A673 (cell line): ENCODE measurements at regions of chr1 and their contacts with region 1.

Region 1: GRCh38 chr1:113242481-113242880 is 147.8 kb upstream of the MAGI3 start:
- DNase-seq: no peak
- H3K4me3 ChIP-seq: no peak overlapping the region
- H3K27ac ChIP-seq: no peak overlapping the region
- H3K4me1 ChIP-seq: no peaks in the 10 kb centered on the region
- H3K27me3 ChIP-seq: no peaks in the 10 kb centered on the region
- CTCF ChIP-seq: no peak

Region 2: DNA sequence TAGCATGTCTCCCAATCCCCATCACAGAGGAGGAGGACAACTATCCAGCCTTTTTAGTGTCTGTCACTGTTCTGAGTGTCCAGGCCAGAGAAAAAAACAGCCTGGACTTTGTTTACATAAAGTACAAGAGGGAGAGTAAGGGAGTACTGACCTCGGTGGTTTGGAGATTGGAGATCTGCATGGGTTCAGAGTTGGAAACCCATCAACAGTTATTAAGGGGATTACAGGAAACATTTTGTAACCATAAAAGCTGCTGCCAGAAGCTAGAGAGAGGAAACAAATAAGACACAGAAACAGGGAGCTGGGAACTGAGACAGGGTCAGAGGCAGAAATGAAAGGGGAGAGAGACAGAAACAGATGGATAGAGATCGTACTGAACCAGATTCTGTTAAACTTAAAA is 977.9 kb before region 1 on chr1:
- CTCF ChIA-PET with region 1: no interaction called
- POLR2A ChIA-PET with region 1: no interaction called
- intact Hi-C with region 1: no loop called
- DNase-seq: no peak
- H3K4me3 ChIP-seq: no peak overlapping the region
- H3K27ac ChIP-seq: no peak overlapping the region
- H3K4me1 ChIP-seq: no peaks in the 10 kb centered on the region
- H3K27me3 ChIP-seq: peaks cover 41% of the 10 kb centered on the region
- CTCF ChIP-seq: no peak

Region 3: DNA sequence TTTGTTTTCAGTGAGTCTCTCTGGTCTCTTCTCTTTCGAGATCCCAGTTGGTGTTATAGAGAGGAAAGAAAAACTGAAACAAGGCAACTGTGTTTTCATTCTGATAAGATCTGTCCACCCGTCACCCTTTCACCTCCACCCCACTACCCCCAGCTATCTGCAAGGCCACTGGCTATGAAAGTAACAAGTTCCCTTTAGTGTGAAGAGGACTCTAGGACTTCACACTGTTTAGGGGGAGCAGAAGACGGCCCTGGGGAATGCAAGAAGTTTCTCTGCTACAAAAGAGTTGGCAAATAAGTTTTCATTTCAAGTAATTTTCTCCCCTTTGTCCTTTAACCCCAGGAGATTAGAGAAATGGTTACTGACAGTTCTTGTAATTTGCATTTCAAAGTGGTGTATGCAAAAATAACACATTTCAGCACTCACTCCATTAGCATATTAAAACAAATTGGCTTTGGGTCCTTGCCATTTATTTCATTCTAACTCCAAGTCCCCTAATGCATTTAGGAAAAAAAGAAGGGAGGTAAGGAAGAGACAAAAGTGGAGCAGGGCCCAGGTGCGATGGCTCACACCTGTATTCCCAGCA is 447.7 kb before region 1 on chr1:
- CTCF ChIA-PET with region 1: no interaction called
- POLR2A ChIA-PET with region 1: no interaction called
- intact Hi-C with region 1: no loop called
- DNase-seq: no peak
- H3K4me3 ChIP-seq: no peak overlapping the region
- H3K27ac ChIP-seq: no peak overlapping the region
- H3K4me1 ChIP-seq: peaks cover 15% of the 10 kb centered on the region
- H3K27me3 ChIP-seq: peaks cover 86% of the 10 kb centered on the region
- CTCF ChIP-seq: no peak

Region 4: DNA sequence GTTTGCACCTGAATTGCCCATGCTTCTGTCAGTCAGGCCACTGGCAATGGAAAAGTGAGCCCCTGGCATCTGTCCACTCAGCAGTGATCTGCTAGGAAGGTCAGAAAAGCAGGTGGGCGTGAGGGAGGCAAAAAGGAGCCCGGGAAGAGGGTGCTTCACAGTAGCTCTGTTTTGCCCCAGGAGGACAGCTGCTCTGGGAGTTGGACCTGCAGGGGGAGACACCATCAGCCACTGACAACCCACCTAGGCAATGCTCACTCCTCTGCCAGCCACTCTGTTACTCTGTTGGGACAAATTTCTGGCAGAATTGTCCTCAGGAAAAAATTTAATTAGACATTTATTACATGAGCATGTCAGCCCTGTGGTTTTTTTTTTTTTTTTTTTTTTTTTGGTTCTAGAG is 23.1 kb before region 1 on chr1:
- CTCF ChIA-PET with region 1: no interaction called
- POLR2A ChIA-PET with region 1: interaction called, 13 read pairs
- intact Hi-C with region 1: no loop called
- DNase-seq: peak; percentile 21
- H3K4me3 ChIP-seq: no peak overlapping the region
- H3K27ac ChIP-seq: no peak overlapping the region
- H3K4me1 ChIP-seq: no peaks in the 10 kb centered on the region
- H3K27me3 ChIP-seq: no peaks in the 10 kb centered on the region
- CTCF ChIP-seq: peak; percentile 42

Region 5: DNA sequence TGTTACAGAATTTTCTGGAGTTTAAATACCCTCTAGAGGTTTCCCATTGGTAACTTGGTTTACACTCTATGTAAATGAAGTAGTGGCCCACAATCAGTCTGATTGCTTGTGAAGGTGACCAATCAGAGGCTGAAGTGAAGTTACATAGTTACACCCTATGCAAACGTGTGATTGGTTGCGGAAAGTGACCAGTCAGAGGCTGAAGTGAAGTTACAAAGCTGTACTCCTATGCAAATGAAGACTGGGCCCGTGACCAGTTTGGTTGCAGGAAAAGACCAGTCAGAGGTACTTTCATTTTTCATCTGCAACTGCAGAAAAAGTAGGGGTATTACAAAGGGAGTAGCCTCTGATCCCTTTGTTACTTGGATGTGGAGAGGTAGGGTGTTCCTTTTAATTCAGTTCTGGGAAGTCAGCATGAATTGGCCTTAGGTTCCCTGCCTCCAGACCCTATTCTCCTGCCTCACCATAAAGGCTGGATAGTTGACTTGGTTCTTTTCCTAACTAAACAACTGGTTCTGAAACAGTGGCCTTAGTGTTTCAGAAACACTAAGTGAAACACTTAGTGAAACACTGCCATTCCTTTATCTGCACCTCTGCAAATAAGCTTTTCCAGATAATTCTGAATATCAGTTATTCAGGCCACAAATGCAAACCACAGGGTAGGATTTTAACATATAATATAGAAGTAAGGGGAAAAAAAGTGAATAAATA is 187.1 kb after region 1 on chr1:
- CTCF ChIA-PET with region 1: no interaction called
- POLR2A ChIA-PET with region 1: no interaction called
- intact Hi-C with region 1: no loop called
- DNase-seq: no peak
- H3K4me3 ChIP-seq: no peak overlapping the region
- H3K27ac ChIP-seq: no peak overlapping the region
- H3K4me1 ChIP-seq: no peaks in the 10 kb centered on the region
- H3K27me3 ChIP-seq: no peaks in the 10 kb centered on the region
- CTCF ChIP-seq: no peak

Region 6: DNA sequence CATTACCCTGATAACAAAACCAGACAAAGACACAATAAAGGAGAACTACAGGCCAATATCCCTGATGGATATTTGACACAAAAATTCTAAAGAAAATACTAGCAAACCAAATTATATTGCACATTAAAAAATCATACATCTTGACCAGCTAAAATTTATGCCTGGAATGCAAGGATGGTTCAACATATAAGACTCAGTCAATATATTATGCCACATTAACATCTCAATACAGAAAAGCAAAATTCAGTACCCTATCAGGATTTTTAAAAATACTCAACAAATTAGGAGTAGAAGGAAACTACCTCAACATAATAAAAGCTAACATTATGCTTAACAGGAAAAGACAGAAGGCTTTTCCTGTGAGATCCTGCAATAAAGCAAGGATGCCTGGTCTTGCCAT is 324.9 kb after region 1 on chr1:
- CTCF ChIA-PET with region 1: no interaction called
- POLR2A ChIA-PET with region 1: no interaction called
- intact Hi-C with region 1: no loop called
- DNase-seq: no peak
- H3K4me3 ChIP-seq: no peak overlapping the region
- H3K27ac ChIP-seq: no peak overlapping the region
- H3K4me1 ChIP-seq: no peaks in the 10 kb centered on the region
- H3K27me3 ChIP-seq: no peaks in the 10 kb centered on the region
- CTCF ChIP-seq: no peak